Cardiac septum (tissue), 1 donor: ENCODE measurements at regions of chr14 and their contacts with region 1.

Region 1: GRCh38 chr14:90399541-90400444 is 3.0 kb downstream of the CALM1 start:
- DNase-seq: peak; percentile 94

Region 2: GRCh38 chr14:90288651-90289355 is 111.0 kb before region 1 on chr14:
- intact Hi-C with region 1: no loop called
- DNase-seq: no peak

Region 3: DNA sequence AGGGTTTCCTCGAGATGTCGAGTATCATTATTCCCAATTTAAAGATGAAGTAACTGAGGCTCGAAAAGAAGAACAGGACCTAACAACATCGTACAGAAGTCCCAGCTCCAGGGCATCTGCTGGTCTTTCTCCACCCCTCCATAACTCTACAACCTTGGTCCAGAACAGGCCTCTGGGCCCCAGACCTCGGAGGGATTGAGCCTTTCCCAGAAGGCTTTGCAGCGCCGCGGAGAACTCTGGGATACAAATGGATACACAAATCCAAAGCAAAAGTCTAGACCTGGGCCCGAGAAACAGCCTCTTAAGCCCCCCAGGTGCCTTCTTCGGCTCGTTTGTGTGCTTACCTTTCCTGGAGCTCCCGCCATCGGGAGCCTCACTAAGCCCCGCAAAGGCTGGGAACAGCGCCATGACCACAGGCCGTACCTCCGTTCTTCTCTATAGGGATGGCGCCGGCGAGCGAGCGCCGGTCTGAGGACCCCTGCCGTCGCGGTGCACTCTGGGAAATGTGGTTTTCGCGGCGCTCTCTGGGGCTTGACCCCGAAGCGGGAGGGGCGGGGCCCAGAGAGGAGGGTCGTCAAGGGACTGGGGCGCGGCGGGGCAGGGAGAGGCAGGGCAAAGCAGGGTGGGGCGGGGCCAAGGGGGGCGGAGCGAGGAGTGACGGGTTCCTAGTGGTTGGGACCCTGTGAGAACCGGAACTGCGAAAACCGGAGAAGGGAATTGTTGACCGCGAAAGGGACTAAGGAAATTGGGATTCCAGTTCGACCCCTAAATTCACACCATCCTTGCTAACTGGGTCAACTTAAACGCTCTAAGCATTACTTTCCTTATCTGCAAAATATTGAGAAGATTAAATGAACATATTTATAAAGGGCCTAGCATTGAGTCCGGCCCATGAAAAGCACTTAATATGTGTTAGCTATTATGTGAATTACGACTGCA is 68.0 kb before region 1 on chr14 and contains the start of gene NRDE2:
- intact Hi-C with region 1: loop called (anchors 5 kb)
- DNase-seq: peak; percentile 99
- total RNA-seq, gene NRDE2: 11.2 TPM

Region 4: GRCh38 chr14:90522571-90523191 is 122.9 kb after region 1 on chr14:
- intact Hi-C with region 1: loop called (anchors 5 kb)
- DNase-seq: no peak

Region 5: DNA sequence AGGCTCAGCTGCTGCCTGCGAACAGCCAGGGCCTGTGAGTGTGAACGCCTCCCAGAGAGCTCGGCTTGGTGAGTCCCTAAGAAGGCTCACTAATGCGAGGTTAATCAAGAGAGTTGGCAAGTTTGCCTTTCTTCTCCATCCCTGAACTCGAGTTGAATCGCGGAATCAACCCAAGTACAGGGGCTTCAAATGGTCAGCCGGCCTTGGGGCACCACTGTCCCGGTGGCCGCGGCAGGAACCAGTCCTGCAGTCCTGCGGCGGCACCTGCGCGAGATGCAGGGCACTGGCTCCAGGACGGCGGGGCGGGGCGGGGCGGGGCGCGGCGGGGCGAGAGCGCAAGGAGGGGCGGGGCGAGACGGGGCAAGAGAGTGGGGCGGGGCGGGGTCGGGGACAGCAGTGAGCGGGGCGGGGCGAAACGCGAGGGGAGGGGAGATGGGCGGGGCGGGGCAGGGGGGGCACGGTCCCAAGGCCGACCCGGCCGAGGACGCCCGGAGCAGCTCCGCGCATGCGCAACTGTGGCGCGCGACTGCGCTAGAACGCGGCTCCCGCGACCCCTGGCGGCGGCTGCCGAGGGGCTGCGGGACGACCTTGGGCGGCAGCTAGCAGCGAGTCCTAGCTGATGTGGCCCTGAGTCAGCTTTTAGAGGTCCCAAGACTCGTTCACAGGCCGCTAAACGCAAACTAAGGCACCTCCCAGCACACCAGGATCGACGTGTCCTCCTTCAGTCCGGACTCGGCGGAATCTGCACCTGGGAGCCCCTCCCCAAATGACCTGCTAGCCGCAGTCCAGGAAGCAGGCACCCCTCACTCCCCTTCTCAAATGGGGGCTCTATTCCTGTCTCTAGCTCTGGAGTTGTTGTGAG is 358.5 kb after region 1 on chr14:
- intact Hi-C with region 1: loop called (anchors 2 kb)
- DNase-seq: peak; percentile 97